Mammary epithelial cell (primary cell): ENCODE measurements at regions of chrX and their contacts with region 1.

Region 1: DNA sequence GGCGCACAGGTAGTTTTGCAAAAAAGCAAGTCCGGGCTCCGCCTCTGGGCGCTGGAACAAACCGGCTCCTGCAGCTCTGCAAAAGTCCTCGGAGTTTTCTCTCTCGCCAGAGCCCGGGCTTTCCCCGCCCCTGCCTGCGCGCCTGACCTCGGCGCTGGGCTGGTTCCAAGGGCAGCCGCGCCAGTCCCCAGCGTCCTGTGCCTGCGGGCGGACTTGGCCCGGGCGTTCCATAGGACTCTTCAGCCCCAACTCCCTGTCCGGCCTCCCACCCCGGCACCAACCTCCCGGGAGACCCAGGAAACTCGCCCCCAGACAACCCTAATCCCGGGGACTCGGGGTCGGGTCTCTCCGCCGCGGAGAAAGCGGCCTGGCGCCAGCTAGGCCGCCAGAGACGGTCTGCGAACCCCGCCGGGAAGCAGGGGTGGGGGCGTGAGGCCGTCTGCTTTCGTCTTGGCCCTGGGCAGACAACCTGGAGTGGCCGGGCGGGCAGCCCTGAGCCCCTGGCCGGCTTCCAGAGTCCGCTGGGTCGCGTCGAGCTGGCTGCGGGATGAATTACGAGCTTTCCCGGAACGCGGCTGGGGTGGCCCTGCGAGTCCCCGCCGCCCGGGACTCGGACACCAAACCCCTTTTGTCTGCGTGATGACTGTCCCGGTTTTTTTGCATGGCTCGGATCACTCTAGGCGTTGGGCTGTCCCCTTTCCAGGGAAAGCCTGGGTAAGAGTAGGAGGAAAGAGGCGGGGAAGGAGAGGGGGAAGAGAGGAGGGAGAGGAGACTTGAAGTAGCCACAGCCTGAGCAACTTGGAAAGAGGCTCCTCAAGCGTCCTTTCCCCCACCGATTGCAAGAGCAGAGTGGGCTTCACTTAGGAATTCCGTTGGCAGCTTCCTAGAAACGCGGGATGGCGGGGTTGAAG is 916 bp downstream of the MXRA5 start:
- DNase-seq: peak; percentile 63
- H3K4me3 ChIP-seq: peak overlapping the region; percentile 34 to 46 (median 36)
- H3K27ac ChIP-seq: no peak overlapping the region
- H3K4me1 ChIP-seq: no peaks in the 10 kb centered on the region
- H3K27me3 ChIP-seq: no peaks in the 10 kb centered on the region
- CTCF ChIP-seq: no peak

Region 2: DNA sequence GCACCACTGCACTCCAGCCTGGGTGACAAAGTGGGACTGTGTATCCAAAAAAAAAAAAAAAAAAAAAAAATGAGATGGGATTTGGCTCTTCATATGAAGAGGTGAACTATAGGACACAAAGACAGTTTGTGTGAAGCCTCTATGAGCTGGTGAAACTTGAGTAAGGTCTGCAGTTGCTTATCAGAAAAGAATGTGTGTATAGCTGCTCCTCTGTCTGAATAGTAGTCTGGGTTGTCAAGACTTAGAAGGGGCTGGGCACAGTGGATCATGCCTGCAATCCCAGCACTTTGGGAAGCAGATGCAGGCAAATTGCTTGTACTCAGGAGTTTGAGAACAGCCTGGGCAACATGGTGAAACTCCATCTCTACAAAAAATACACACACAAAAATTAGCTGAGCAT is 221.5 kb before region 1 on chrX:
- CTCF ChIA-PET with region 1: no interaction called
- dilution Hi-C with region 1: no loop called
- in situ Hi-C with region 1: no loop called
- intact Hi-C with region 1: no loop called
- DNase-seq: no peak
- H3K4me3 ChIP-seq: no peak overlapping the region
- H3K27ac ChIP-seq: no peak overlapping the region
- H3K4me1 ChIP-seq: no peaks in the 10 kb centered on the region
- H3K27me3 ChIP-seq: no peaks in the 10 kb centered on the region
- CTCF ChIP-seq: no peak

Region 3: DNA sequence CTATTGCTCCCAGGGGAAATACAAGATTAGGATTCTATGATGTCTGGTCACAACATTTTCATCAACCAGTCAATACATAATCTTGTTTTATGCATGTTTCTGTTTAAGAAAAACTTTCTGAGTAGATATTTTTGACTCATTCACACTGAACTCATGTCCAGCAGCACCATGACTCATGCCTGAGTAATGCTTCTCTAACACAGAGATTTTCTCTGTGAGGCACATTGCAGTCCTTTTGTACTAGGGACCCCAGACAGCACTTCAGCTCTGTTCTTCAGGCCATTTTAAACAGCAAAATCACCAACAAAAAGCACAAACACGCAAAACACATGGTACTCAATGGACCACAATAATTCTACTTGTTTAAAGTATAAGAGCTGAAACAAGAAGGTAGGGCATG is 82.6 kb before region 1 on chrX:
- CTCF ChIA-PET with region 1: no interaction called
- dilution Hi-C with region 1: no loop called
- in situ Hi-C with region 1: no loop called
- intact Hi-C with region 1: loop called (anchors 1 kb)
- DNase-seq: peak; percentile 74
- H3K4me3 ChIP-seq: no peak overlapping the region
- H3K27ac ChIP-seq: peak overlapping the region; percentile 49
- H3K4me1 ChIP-seq: peaks cover 9% of the 10 kb centered on the region
- H3K27me3 ChIP-seq: no peaks in the 10 kb centered on the region
- CTCF ChIP-seq: no peak